Activated CD4-positive, alpha-beta memory T cell treated with anti-CD3 and anti-CD28 coated beads, Interleukin-2, amount 10 ng/mL, durations not matched to agents 7 days and 5 days (primary cell): ENCODE measurements at regions of chr12 and their contacts with region 1.

Region 1: DNA sequence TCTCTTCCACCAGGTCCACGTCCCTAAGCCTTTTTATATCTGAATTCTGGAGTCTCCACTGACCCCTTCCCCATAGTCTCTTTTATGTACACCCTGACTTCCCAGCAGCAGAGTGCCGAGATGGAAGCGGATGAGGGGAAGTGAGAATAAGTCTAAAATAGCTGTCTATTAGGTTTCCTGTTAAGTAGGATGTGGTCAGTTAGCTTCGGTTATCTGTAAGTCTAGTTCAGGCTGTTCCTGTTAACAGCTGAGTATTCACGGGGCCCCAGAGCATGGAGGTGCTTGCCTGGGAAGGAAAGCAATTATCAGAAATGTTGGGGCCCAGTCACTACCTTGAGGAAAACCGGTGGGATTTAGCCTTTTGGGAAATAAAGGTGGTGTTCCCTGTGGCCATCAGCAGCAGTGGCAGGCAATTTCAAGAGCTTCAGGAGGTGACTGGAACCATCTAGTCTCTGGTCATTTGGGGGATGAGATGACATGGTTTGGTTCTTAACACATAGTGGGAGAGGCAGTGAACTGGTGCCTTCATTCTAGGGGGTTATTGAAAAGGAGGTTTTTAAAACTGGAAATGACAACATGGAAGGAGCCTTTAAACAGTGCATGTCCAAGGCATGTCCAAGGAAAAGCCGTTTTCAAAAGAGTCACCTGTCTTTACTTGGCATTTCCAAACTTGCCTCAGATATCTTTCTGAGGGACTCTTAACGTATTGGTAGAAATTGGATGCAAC is 21.8 kb downstream of the CHST11 start:
- DNase-seq: peak; percentile 55
- H3K4me3 Mint-ChIP-seq: peak overlapping the region; percentile 85
- H3K27ac Mint-ChIP-seq: peak overlapping the region; percentile 96
- H3K4me1 Mint-ChIP-seq: peaks cover 88% of the 10 kb centered on the region
- H3K27me3 Mint-ChIP-seq: no peaks in the 10 kb centered on the region

Region 2: DNA sequence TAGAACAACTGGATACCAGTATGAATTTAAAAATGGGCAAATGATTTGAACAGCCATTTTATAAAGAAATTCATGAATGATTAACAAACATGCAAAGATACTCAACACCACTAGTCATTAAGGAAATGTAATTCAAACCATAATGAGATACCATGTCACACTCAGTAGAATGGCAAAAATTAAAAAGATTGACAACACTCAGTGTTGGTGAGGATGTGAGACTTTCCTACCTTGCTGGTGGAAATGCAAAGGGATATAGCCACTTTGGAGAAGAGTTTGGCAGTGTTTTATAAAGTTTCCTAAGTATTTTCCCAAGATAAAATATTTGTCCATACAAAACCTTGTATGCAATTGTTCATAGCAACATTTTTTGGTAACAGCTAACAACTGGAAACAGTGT is 27.9 kb before region 1 on chr12:
- CTCF ChIA-PET with region 1: no interaction called
- POLR2A ChIA-PET with region 1: no interaction called
- DNase-seq: no peak
- H3K4me3 Mint-ChIP-seq: no peak overlapping the region
- H3K27ac Mint-ChIP-seq: no peak overlapping the region
- H3K4me1 Mint-ChIP-seq: peaks cover 8% of the 10 kb centered on the region
- H3K27me3 Mint-ChIP-seq: peaks cover 4% of the 10 kb centered on the region

Region 3: GRCh38 chr12:104462931-104463339 is 15.6 kb before region 1 on chr12:
- CTCF ChIA-PET with region 1: interaction called, 30 read pairs
- POLR2A ChIA-PET with region 1: interaction called, 106 read pairs
- DNase-seq: peak; percentile 65
- H3K4me3 Mint-ChIP-seq: peak overlapping the region; percentile 78
- H3K27ac Mint-ChIP-seq: peak overlapping the region; percentile 94
- H3K4me1 Mint-ChIP-seq: peaks cover 72% of the 10 kb centered on the region
- H3K27me3 Mint-ChIP-seq: no peaks in the 10 kb centered on the region

Region 4: GRCh38 chr12:104494137-104494792 is 15.7 kb after region 1 on chr12:
- CTCF ChIA-PET with region 1: interaction called, 13 read pairs
- POLR2A ChIA-PET with region 1: interaction called, 25 read pairs
- DNase-seq: peak; percentile 69
- H3K4me3 Mint-ChIP-seq: peak overlapping the region; percentile 64
- H3K27ac Mint-ChIP-seq: peak overlapping the region; percentile 91
- H3K4me1 Mint-ChIP-seq: peaks cover 93% of the 10 kb centered on the region
- H3K27me3 Mint-ChIP-seq: no peaks in the 10 kb centered on the region

Region 5: DNA sequence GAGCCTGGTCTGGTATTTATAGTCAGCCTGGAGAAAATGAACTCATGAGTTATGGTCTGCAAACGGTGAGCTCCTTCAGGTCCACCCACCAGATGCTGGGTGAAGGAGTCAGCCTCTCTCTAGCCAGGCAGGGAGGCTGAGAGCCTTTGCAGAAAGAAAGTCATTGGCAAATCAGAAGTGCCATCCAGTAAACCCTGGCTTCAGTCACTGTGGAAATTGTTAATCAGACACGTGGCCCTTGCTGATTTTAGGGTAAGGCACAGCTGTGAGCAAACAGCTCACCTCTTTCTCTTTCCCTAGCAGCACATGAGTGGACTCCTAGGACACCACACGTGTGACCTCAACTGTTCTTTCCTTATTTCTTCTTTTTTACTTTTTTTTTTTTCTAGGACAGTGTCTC is 23.1 kb after region 1 on chr12:
- CTCF ChIA-PET with region 1: no interaction called
- POLR2A ChIA-PET with region 1: interaction called, 10 read pairs
- DNase-seq: no peak
- H3K4me3 Mint-ChIP-seq: no peak overlapping the region
- H3K27ac Mint-ChIP-seq: no peak overlapping the region
- H3K4me1 Mint-ChIP-seq: peaks cover 92% of the 10 kb centered on the region
- H3K27me3 Mint-ChIP-seq: no peaks in the 10 kb centered on the region

Region 6: GRCh38 chr12:104588068-104588920 is 109.7 kb after region 1 on chr12:
- CTCF ChIA-PET with region 1: no interaction called
- POLR2A ChIA-PET with region 1: no interaction called
- DNase-seq: no peak
- H3K4me3 Mint-ChIP-seq: no peak overlapping the region
- H3K27ac Mint-ChIP-seq: no peak overlapping the region
- H3K4me1 Mint-ChIP-seq: peaks cover 17% of the 10 kb centered on the region
- H3K27me3 Mint-ChIP-seq: no peaks in the 10 kb centered on the region

Region 7: GRCh38 chr12:104604070-104604994 is 125.8 kb after region 1 on chr12:
- CTCF ChIA-PET with region 1: no interaction called
- POLR2A ChIA-PET with region 1: interaction called, 15 read pairs
- DNase-seq: peak; percentile 71
- H3K4me3 Mint-ChIP-seq: peak overlapping the region; percentile 34
- H3K27ac Mint-ChIP-seq: peak overlapping the region; percentile 95
- H3K4me1 Mint-ChIP-seq: peaks cover 69% of the 10 kb centered on the region
- H3K27me3 Mint-ChIP-seq: no peaks in the 10 kb centered on the region